Tibial artery (tissue), 4 donors: ENCODE measurements at regions of chr13 and their contacts with region 1.

Region 1: GRCh38 chr13:96229356-96229755 is 139.4 kb downstream of the HS6ST3 start:
- DNase-seq: no peak
- H3K4me3 ChIP-seq: no peak overlapping the region
- H3K27ac ChIP-seq: no peak overlapping the region
- H3K4me1 ChIP-seq: no peaks in the 10 kb centered on the region
- H3K27me3 ChIP-seq: no peaks in the 10 kb centered on the region
- CTCF ChIP-seq: no peak

Region 2: DNA sequence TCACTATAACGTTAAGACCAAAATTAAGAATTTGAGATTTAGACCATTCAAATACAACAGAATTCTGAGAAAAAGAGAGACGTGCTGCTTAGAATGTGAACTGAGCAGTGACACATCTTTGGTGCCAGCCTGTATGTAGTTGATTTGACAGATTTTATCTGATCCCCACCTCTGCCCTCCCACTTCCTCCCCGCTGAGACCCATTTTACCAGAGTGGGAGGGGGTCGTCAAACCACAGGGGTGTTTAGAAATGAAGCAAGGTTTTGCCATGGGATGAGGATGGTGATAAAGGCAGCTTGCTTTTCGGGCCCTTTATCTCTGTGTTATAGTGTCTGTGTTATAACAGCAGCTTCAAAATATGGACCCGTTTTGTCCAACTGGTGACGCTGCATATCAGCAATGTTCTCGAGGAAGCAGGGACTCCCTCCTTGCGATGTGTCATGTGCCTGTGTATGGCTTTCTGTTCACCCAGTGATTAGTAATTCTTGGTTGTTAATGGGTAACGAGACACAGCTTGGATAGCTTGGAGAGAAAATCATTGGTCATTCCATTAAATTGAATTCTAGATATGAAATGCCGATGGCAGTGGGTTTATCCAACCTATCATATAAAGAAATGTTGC is 14.4 kb before region 1 on chr13:
- intact Hi-C with region 1: loop called (anchors 1 kb)
- DNase-seq: no peak
- H3K4me3 ChIP-seq: no peak overlapping the region
- H3K27ac ChIP-seq: no peak overlapping the region
- H3K4me1 ChIP-seq: peaks cover 0 to 11% (median 3%) of the 10 kb centered on the region in 4 donors
- H3K27me3 ChIP-seq: no peaks in the 10 kb centered on the region
- CTCF ChIP-seq: no peak

Region 3: GRCh38 chr13:96248103-96248502 is 18.7 kb after region 1 on chr13:
- intact Hi-C with region 1: no loop called
- DNase-seq: no peak
- H3K4me3 ChIP-seq: no peak overlapping the region
- H3K27ac ChIP-seq: no peak overlapping the region
- H3K4me1 ChIP-seq: no peaks in the 10 kb centered on the region
- H3K27me3 ChIP-seq: no peaks in the 10 kb centered on the region
- CTCF ChIP-seq: no peak